ENCODE measurements at regions of chr1 and their contacts with region 1.

Region 1: DNA sequence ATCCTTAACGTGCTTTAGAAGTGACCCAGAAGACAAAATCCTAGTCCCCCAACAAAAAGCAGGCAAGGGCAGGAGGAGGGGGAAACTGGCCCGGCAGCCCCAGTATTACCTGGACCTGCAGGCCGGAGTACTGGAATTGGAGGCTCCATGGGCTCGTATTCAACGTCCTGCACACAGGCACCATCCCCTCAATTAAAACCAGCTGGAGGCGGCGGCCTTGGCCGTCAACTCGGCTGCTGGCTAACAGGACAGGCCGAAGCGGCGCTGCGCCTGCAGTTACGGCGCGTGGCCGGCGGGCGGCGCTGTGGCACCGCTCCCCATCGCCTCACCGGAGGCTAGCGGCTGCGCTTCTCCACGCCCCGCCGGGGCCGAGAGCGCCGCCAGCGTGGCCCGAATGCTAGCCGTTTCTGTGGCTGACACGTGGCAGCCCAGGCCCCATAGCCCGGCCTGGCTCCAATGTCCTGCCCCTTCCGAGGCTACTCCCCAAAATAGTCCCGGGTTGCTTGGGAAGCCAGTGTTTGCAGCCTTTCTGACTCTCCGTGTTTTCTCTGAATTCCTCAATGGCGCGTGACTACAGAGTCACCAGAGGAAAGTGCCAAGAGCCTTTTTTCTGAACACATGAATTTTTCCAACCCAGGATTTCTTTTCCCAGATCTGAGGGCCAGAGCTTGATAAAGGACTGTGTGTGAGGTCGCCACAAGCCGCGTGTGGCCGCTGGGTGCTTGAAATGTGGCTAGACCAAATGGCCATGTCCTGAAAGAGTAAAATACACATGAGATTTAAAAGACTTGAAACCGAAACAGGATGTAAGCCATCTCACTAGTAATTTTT is 82.5 kb downstream of the HHIPL2 start:
- DNase-seq: peak; percentile 75
- H3K4me3 ChIP-seq: peak overlapping the region; percentile 24
- H3K27ac ChIP-seq: peak overlapping the region; percentile 68 to 79
- H3K4me1 ChIP-seq: no peaks in the 10 kb centered on the region
- H3K27me3 ChIP-seq: no peaks in the 10 kb centered on the region
- CTCF ChIP-seq: peak; percentile 99 to 100 (median 100)
- POLR2A ChIP-seq: no peak

Region 2: DNA sequence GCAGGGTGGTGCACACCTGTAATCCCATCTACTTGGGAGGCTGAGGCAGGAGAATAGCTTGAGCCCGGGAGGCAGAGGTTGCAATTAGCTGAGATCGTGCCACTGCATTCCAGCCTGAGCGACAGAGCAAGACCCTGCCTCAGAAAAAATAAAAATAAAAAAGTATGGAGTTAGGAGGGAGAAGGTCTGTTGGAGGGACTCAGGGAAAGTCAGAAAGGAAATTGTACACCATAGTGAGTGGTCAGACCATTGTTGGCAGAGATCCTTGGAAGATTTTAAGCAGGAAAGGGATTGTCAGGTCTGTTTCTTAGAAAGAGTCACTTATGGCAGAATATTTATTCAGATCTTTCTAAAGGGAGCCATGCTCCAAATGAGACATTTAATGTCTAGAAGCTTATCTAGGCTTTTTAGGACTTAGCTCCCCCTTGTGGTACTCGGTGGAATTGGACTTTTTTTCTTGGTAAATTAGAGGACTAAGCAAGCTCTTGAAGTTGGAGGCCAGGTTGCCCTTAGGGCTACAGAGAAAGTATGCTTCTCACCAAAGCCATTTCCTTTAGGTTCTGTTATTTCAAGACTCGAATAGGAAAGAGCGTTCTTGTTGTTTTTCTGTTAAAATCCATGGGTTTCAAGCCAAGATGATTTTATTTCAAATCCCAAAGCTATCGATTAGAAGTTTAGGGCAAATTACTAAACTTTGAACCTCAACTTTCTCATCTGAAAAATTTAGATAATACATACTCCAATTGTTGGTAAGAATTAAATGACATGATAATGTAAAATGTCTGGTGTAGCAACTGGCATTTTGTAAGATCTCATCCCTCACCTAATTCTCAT is 169.0 kb after region 1 on chr1:
- intact Hi-C with region 1: loop called (anchors 2 kb)
- DNase-seq: peak; percentile 86
- H3K4me3 ChIP-seq: no peak overlapping the region
- H3K27ac ChIP-seq: no peak overlapping the region
- H3K4me1 ChIP-seq: no peaks in the 10 kb centered on the region
- H3K27me3 ChIP-seq: no peaks in the 10 kb centered on the region
- CTCF ChIP-seq: peak; percentile 67 to 92 (median 85)
- POLR2A ChIP-seq: no peak

Region 3: DNA sequence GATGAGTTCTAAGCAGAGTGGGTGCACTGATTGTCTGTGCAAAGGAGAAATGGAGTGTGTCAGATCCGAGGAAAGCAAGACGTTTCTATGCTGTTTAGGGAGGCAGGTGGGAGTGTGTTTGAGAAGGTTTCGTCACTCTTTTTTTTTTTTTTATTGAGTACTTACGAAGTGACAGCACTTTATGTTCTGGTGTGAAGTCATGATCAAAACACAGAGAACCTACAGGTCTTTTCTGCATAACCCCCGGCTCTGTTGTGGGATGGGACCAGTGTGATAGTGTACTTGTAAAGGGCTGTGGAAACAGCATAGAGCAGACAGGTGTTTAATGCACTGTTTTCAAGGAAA is 179.2 kb after region 1 on chr1:
- intact Hi-C with region 1: no loop called
- DNase-seq: no peak
- H3K4me3 ChIP-seq: peak overlapping the region; percentile 61 to 78
- H3K27ac ChIP-seq: peak overlapping the region; percentile 85 to 86
- H3K4me1 ChIP-seq: peaks cover 2% of the 10 kb centered on the region
- H3K27me3 ChIP-seq: no peaks in the 10 kb centered on the region
- CTCF ChIP-seq: no peak
- POLR2A ChIP-seq: no peak

Measured in prostate gland (tissue), 2 donors.